ENCODE measurements at regions of chr1 and their contacts with region 1.

Region 1: DNA sequence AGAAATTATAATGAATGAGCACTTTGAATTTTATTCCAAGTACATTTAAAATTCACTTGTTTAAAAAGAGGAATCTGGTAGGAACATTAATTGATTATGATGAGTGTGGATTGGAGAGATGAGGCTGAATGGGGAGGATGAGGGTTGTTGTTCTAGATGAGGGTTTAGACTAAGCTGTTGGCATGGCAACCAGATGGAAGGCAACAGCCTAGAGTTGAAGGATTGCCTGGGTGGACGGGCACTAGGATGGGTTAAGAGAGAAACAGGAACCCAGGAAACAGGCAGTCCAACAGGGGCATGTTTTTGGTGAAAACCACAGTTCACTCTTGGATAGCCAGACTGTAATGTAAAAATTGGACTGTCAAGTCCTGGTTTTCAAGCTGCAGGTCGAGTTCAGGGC is 125.5 kb downstream of the CHRM3 start:
- DNase-seq: no peak
- ATAC-seq: no peak
- H3K4me3 Mint-ChIP-seq: no peak overlapping the region
- H3K27ac Mint-ChIP-seq: no peak overlapping the region
- H3K4me1 Mint-ChIP-seq: no peaks in the 10 kb centered on the region
- H3K27me3 Mint-ChIP-seq: no peaks in the 10 kb centered on the region

Region 2: GRCh38 chr1:239493811-239494414 is 18.0 kb before region 1 on chr1:
- POLR2A ChIA-PET with region 1: no interaction called
- DNase-seq: no peak
- ATAC-seq: no peak
- H3K4me3 Mint-ChIP-seq: no peak overlapping the region
- H3K27ac Mint-ChIP-seq: no peak overlapping the region
- H3K4me1 Mint-ChIP-seq: no peaks in the 10 kb centered on the region
- H3K27me3 Mint-ChIP-seq: no peaks in the 10 kb centered on the region

Region 3: DNA sequence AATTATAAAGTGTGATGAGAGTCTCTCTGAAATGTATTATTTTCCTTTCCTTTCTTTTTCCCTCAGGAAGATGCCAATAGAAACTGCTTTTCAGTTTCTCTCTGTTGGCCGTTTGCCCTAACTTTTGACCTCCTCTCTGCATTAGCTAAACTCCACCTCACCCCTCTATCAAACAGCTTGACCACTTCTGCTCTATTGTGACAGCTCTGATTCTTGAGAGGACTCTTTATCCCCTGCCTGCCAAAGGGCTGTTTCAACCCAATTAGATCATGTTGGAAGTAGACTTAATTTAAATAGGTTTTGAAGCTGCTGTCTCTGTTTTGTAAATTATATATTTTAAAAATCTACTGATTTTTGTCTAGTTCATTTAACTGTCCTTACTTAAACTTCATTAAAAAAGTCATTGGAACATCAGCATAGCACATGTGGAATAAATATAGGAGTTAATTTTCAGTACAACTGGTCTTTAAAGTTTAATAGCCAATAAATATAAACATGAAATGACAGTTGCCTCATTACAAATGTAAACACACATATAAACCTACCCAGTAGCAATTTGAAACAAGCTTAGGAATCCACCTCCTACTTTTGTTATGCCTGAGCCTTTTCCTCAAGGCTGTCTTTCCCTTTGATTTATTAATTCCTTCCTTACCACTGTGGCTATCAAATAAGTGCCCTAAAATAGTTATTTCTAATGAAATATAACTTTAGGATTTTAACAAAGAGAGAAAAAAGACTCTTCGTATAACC is 26.5 kb after region 1 on chr1:
- POLR2A ChIA-PET with region 1: no interaction called
- DNase-seq: no peak
- ATAC-seq: no peak
- H3K4me3 Mint-ChIP-seq: no peak overlapping the region
- H3K27ac Mint-ChIP-seq: no peak overlapping the region
- H3K4me1 Mint-ChIP-seq: no peaks in the 10 kb centered on the region
- H3K27me3 Mint-ChIP-seq: peaks cover 2% of the 10 kb centered on the region

Region 4: GRCh38 chr1:239616680-239617079 is 104.8 kb after region 1 on chr1:
- POLR2A ChIA-PET with region 1: interaction called, 11 read pairs
- DNase-seq: no peak
- ATAC-seq: no peak
- H3K4me3 Mint-ChIP-seq: no peak overlapping the region
- H3K27ac Mint-ChIP-seq: no peak overlapping the region
- H3K4me1 Mint-ChIP-seq: no peaks in the 10 kb centered on the region
- H3K27me3 Mint-ChIP-seq: no peaks in the 10 kb centered on the region